ENCODE measurements at regions of chr17 and their contacts with region 1.

Region 1: GRCh38 chr17:80008383-80008840 is 27.3 kb downstream of the TBC1D16 start:
- DNase-seq: peak; percentile 71 to 88 (median 78)
- ATAC-seq: peak; percentile 48 to 85 (median 79)
- H3K4me3 ChIP-seq: no peak overlapping the region
- H3K27ac ChIP-seq: no peak overlapping the region
- H3K4me1 ChIP-seq: peaks cover 0 to 15% (median 10%) of the 10 kb centered on the region in 12 donors
- H3K27me3 ChIP-seq: no peaks in the 10 kb centered on the region
- CTCF ChIP-seq: peak; percentile 82 to 97 (median 92)
- POLR2A ChIP-seq: no peak

Region 2: DNA sequence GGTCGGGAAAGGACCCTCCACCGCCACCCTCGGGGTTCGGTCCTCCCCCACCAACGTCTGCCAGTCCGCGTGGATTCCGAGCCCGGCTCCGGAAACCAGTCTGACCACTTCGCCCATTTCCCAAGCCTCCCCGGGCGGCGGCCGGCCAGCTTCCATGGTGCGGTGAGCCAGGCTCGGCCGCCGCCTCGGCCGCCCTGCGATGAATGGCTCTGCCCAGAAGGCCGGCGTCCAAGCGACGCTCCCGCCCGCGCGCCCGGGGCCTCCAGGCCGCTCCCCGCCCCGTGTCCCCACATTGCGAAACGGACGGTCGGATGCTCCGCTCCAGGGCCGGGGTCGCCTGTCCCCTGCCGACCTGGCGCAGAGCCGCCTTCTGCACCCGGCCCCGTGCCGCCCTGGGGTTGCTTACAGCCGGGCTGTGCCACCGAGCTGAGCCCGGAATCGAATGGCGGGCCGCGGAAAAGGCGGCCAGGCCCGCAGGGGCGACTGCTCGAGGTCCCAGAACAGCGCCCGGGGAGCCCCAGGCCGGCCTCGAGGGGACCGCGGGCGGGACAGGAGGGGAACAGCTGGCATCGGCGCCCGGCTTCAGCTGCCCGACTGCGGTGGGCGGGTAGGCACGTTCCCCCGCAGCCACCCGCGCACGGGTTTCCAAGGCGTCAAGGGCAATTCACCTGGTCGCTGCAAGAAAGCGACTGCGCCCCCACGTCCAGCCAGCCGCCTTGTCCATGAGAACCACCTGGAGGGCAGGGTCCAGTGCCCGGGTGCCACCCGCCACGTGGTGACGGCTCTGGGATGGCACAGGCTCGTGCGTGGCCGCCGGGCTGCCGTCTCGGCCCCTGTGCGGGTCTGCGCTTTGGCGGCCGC is 193.2 kb before region 1 on chr17:
- intact Hi-C with region 1: no loop called
- DNase-seq: peak in 1 of 5 donors; percentile 24
- ATAC-seq: peak in 2 of 4 donors; percentile 7 to 17
- H3K4me3 ChIP-seq: peak overlapping the region in 10 of 12 donors; percentile 3 to 43 (median 27)
- H3K27ac ChIP-seq: no peak overlapping the region
- H3K4me1 ChIP-seq: peaks cover 4 to 69% (median 39%) of the 10 kb centered on the region in 12 donors
- H3K27me3 ChIP-seq: peaks cover 45 to 77% (median 59%) of the 10 kb centered on the region in 9 donors
- CTCF ChIP-seq: no peak
- POLR2A ChIP-seq: no peak

Region 3: GRCh38 chr17:79974566-79975497 is 33.6 kb before region 1 on chr17:
- intact Hi-C with region 1: no loop called
- DNase-seq: no peak
- ATAC-seq: no peak
- H3K4me3 ChIP-seq: no peak overlapping the region
- H3K27ac ChIP-seq: no peak overlapping the region
- H3K4me1 ChIP-seq: no peaks in the 10 kb centered on the region
- H3K27me3 ChIP-seq: no peaks in the 10 kb centered on the region
- CTCF ChIP-seq: peak in 1 of 12 donors; percentile 17
- POLR2A ChIP-seq: no peak

Region 4: DNA sequence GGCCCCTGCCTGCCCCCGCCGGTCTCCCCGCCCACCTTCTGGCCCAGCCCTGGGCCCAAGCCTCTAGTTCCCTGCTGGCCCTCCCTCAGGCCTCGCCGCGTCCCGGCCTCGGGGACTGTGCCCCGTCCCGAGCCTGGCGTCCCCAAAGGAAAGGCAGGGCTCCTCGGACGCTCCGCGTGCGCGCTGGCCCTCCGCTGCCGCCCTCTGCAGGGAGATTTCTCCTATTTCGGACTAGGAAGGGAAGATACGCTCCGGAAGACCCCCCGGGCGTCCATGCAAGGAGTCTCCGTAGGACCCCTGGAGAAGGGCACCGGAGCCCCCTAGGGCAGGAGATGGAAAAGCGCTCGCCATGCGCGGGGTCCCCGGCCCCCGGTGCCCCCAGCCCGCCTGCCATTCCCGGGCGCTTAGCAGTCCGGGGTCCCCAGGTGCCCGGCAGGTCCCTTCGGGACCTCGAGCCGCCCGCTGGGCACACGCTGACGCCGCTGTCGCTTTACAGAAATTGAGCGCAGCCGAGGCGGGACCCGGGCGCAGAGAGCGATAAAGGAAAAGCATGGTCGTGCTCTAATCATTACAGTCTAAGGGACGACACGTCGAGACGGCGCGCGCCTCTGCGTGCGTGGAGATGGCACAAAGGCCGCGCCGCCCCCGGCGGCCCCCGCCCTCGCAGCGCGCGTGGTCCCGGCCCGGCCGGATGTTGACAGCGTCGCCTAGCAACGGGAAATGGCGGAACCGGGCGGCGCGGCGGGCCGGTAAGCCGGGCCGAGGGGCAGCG is 27.7 kb after region 1 on chr17 and contains the start of gene CCDC40:
- intact Hi-C with region 1: loop called in 1 of 10 experiments (anchors 1 kb)
- DNase-seq: peak; percentile 88 to 92 (median 90)
- ATAC-seq: peak; percentile 89 to 96 (median 96)
- H3K4me3 ChIP-seq: peak within 1 kb of the TSS; percentile 55 to 95 (median 84)
- H3K27ac ChIP-seq: peak within 1 kb of the TSS; percentile 82 to 96 (median 88)
- H3K4me1 ChIP-seq: peaks cover 0 to 28% (median 9%) of the 10 kb centered on the region in 12 donors
- H3K27me3 ChIP-seq: peaks cover 0 to 9% (median 0%) of the 10 kb centered on the region in 9 donors
- CTCF ChIP-seq: peak in 3 of 12 donors; percentile 24 to 39 (median 28)
- POLR2A ChIP-seq: peak in 1 of 2 donors; percentile 33
- total RNA-seq, gene CCDC40: 2.4 to 9.0 (median 5.9) TPM

Region 5: GRCh38 chr17:80058311-80058955 is 50.0 kb after region 1 on chr17:
- intact Hi-C with region 1: no loop called
- DNase-seq: no peak
- ATAC-seq: no peak
- H3K4me3 ChIP-seq: no peak overlapping the region
- H3K27ac ChIP-seq: no peak overlapping the region
- H3K4me1 ChIP-seq: peaks cover 0 to 11% (median 0%) of the 10 kb centered on the region in 12 donors
- H3K27me3 ChIP-seq: no peaks in the 10 kb centered on the region
- CTCF ChIP-seq: no peak
- POLR2A ChIP-seq: no peak

Region 6: GRCh38 chr17:80071116-80071980 is 62.9 kb after region 1 on chr17:
- intact Hi-C with region 1: loop called in 2 of 10 experiments (anchors 5 to 10 kb)
- DNase-seq: peak; percentile 47 to 71 (median 62)
- ATAC-seq: peak; percentile 67 to 79 (median 68)
- H3K4me3 ChIP-seq: peak overlapping the region; percentile 3 to 59 (median 44)
- H3K27ac ChIP-seq: peak overlapping the region; percentile 72 to 92 (median 86)
- H3K4me1 ChIP-seq: peaks cover 0 to 40% (median 31%) of the 10 kb centered on the region in 12 donors
- H3K27me3 ChIP-seq: no peaks in the 10 kb centered on the region
- CTCF ChIP-seq: no peak
- POLR2A ChIP-seq: no peak

Region 7: DNA sequence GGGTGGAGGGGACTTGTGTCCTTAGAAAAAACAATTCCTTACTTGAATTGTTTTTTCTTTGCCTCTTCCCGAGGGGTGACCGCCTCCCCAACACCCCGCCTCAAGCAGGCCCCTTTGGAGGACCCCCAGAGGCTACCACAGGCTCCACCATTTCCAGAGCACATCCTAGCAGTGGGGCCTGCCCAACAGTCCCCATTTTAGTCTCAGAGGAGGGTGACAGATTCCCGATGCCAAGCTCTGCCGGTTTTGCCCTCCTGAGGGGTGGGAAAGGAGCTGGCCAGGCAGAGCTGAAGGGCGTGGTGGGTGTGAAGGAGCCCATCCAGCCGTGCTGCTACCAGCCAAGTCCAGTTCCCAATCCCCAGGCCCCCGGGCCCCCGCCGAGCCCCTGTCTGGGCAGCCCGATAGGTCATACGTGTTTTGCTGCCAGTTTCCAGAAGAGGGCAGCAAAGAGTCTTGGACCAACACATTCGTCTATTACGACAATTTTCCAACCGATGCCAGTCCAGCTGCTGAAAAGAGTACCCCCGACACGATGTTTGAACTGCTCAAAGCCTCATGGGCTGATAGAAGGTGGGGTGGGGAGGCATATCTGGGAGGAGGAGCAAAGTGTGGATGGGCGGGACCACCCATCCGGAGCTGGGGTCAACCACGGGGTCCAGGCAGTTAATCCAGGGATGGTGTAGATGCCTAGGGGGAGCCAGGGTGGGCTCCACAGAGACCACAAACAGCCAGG is 74.2 kb after region 1 on chr17:
- intact Hi-C with region 1: loop called in 7 of 10 experiments (anchors 5 to 10 kb)
- DNase-seq: peak in 4 of 5 donors; percentile 49 to 63 (median 50)
- ATAC-seq: peak in 3 of 4 donors; percentile 56 to 69 (median 61)
- H3K4me3 ChIP-seq: peak overlapping the region in 3 of 12 donors; percentile 11 to 26 (median 25)
- H3K27ac ChIP-seq: no peak overlapping the region
- H3K4me1 ChIP-seq: peaks cover 0 to 8% (median 4%) of the 10 kb centered on the region in 12 donors
- H3K27me3 ChIP-seq: no peaks in the 10 kb centered on the region
- CTCF ChIP-seq: peak; percentile 65 to 82 (median 76)
- POLR2A ChIP-seq: no peak

Region 8: GRCh38 chr17:80101011-80101945 is 92.9 kb after region 1 on chr17 and contains the start of gene GAA:
- intact Hi-C with region 1: loop called in 1 of 10 experiments (anchors 5 kb)
- DNase-seq: peak; percentile 89 to 96 (median 89)
- ATAC-seq: peak; percentile 75 to 91 (median 84)
- H3K4me3 ChIP-seq: peak within 1 kb of the TSS; percentile 68 to 99 (median 90)
- H3K27ac ChIP-seq: peak within 1 kb of the TSS; percentile 36 to 98 (median 91)
- H3K4me1 ChIP-seq: peaks cover 0 to 23% (median 7%) of the 10 kb centered on the region in 12 donors
- H3K27me3 ChIP-seq: no peaks in the 10 kb centered on the region
- CTCF ChIP-seq: peak; percentile 50 to 98 (median 88)
- POLR2A ChIP-seq: peak in 1 of 2 donors; percentile 82
- total RNA-seq, gene GAA: 27.5 to 109 (median 48.0) TPM

Region 9: DNA sequence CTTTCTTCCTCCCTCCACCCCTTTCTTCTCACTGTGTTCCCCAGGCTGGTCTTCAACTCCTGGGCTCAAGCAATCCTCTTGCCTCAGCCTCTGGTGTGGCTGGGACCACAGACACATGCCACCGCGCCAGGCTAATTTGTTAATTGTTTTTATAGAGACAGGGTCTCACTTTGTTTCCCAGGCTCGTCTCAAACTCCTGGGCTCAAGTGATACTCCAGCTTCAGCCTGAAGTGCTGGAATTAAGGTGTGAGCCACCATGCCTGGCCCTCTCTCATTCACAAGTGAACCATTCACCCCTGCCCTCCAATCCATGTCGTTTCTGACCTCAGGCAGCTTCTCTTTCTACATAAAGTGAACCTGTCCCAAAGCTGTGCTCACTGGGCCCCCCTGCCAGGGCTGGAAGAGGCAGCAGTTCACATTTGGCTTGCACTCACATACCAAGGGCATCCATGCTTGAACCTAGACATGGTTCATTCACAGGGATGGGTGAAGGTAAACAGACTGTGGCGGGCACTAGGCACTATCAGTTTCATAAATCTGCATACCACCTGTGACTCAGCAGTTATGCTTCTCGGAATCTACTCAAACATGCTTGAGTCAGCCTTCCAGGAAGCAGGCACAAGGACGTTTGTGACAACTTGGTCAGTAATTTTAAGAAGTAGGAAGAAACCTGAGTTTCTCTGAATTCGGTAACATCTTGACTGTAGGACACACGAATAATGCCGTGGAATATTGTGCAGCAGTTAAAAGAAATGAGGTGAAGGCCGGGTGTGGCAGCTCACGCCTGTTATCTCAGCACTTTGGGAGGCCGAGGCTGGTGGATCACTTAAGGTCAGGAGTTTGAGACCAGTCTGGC is 246.2 kb after region 1 on chr17:
- intact Hi-C with region 1: loop called in 1 of 10 experiments (anchors 10 kb)
- DNase-seq: no peak
- ATAC-seq: peak in 3 of 4 donors; percentile 28 to 52 (median 49)
- H3K4me3 ChIP-seq: no peak overlapping the region
- H3K27ac ChIP-seq: peak overlapping the region in 2 of 12 donors; percentile 17 to 90
- H3K4me1 ChIP-seq: peaks cover 0 to 37% (median 3%) of the 10 kb centered on the region in 12 donors
- H3K27me3 ChIP-seq: no peaks in the 10 kb centered on the region
- CTCF ChIP-seq: no peak
- POLR2A ChIP-seq: no peak

Measured in heart left ventricle (tissue), 16 donors.